Mammary epithelial cell (primary cell): ENCODE measurements at regions of chr4 and their contacts with region 1.

Region 1: DNA sequence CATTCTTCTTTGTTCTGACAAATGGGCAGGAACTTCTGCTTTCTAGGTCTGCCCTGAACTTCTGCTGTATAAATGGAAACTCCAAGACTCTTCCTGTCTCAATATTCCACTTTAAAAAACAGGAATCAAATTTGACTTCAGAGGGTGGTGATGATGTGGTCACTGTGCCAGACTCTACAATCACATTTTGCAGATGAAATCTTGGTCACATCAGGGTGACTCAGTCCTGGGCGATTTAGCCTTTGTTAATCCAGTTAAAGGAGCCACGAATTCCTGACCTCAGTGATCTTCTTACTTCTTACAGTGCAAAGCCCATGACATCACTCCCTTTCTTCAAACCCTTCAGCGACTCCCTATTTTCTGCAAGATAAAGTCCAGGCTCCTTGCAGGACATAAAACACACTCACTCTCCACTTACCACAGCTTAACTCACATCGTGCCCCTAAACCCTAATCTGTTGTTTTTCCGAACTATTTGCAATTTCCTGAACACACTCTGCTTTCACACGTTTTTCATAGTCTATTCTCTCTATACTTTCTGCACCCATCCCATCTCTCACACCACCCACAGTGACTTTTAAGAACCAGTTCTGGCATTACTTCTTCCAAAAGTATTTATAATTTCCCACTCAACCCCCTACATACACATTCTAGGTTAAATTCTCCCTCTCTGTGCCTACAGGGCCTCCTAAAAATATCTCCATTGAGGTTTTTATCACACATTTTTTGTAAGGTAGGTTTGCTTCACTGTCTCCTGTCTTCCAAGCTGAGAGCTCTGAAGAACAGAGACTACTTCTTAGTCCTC is 11.1 kb downstream of the GASK1B start:
- DNase-seq: peak; percentile 81
- H3K4me3 ChIP-seq: peak overlapping the region in 1 of 3 experiments; percentile 17
- H3K27ac ChIP-seq: peak overlapping the region; percentile 81
- H3K4me1 ChIP-seq: peaks cover 82% of the 10 kb centered on the region
- H3K27me3 ChIP-seq: no peaks in the 10 kb centered on the region
- CTCF ChIP-seq: no peak

Region 2: DNA sequence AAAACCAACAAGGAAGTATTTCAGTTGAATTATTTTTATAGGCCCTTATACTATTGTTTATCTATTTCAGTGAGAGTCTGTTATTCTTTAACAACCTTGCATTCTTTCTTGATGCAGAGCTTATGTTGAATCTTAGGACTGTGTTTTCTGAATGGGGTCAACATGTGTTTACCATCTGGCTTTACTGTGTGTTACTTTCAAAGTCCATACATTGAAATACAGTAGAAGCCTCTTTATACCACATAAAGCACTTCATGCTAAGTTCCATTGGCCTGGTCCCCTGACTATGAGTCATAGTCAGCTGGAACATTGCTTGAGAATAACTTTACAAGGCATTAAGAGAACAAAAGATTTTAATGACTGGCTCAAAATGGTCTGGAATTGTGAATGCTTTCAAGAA is 141.6 kb before region 1 on chr4:
- CTCF ChIA-PET with region 1: no interaction called
- dilution Hi-C with region 1: no loop called
- in situ Hi-C with region 1: loop called in 1 of 2 experiments (anchors 10 kb)
- intact Hi-C with region 1: no loop called
- DNase-seq: peak; percentile 82
- H3K4me3 ChIP-seq: peak overlapping the region in 1 of 3 experiments; percentile 18
- H3K27ac ChIP-seq: peak overlapping the region; percentile 50
- H3K4me1 ChIP-seq: peaks cover 39% of the 10 kb centered on the region
- H3K27me3 ChIP-seq: no peaks in the 10 kb centered on the region
- CTCF ChIP-seq: no peak

Region 3: DNA sequence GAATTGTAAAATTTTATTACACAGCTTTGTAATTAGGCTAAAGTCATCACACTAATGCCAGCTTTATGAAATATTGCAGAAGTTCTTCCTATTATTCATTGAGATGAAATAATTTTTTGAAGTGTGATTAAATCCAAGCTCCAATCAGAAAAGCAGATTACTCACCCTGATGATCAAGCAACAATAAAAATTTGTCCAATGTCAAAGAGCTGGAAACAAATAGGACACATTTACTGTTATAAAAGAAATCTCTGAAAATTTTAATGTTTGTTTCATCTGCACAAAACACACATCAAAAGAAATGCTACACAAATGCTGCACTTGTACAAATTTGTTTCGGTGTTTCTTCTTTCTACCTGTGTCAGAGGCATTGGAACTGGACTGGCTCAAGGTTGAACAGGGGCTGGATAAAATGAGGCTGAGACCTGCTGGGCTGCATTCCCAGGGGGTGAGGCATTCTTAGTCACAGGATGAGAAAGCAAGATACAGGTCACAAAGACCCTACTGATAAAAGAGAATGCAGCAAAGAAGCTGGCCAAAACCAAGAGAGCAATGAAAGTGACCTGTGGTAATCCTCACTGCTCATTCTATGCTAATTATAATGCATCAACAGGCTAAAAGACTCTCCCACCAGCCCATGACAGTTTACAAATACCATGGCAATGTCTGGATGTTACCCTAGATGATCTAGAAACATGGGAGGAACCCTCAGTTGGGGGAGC is 67.2 kb before region 1 on chr4:
- CTCF ChIA-PET with region 1: no interaction called
- dilution Hi-C with region 1: no loop called
- in situ Hi-C with region 1: no loop called
- intact Hi-C with region 1: loop called (anchors 2 kb)
- DNase-seq: peak; percentile 93
- H3K4me3 ChIP-seq: peak overlapping the region in 2 of 3 experiments; percentile 9 to 23
- H3K27ac ChIP-seq: peak overlapping the region; percentile 74
- H3K4me1 ChIP-seq: peaks cover 25% of the 10 kb centered on the region
- H3K27me3 ChIP-seq: no peaks in the 10 kb centered on the region
- CTCF ChIP-seq: no peak

Region 4: GRCh38 chr4:158295053-158295452 is 133.3 kb after region 1 on chr4:
- CTCF ChIA-PET with region 1: no interaction called
- dilution Hi-C with region 1: no loop called
- in situ Hi-C with region 1: no loop called
- intact Hi-C with region 1: no loop called
- DNase-seq: no peak
- H3K4me3 ChIP-seq: no peak overlapping the region
- H3K27ac ChIP-seq: no peak overlapping the region
- H3K4me1 ChIP-seq: no peaks in the 10 kb centered on the region
- H3K27me3 ChIP-seq: no peaks in the 10 kb centered on the region
- CTCF ChIP-seq: no peak